Activated CD4-positive, alpha-beta memory T cell treated with anti-CD3 and anti-CD28 coated beads for 36 hours (primary cell): ENCODE measurements at regions of chr18 and their contacts with region 1.

Region 1: GRCh38 chr18:77108001-77108692 is 24.4 kb downstream of the MBP start:
- DNase-seq: peak; percentile 79
- H3K4me3 Mint-ChIP-seq: peak overlapping the region; percentile 31
- H3K27ac Mint-ChIP-seq: peak overlapping the region; percentile 71
- H3K4me1 Mint-ChIP-seq: peaks cover 92% of the 10 kb centered on the region
- H3K27me3 Mint-ChIP-seq: no peaks in the 10 kb centered on the region

Region 2: GRCh38 chr18:77054606-77055428 is 53.3 kb before region 1 on chr18:
- CTCF ChIA-PET with region 1: interaction called, 11 read pairs
- POLR2A ChIA-PET with region 1: interaction called, 4 read pairs
- intact Hi-C with region 1: no loop called
- DNase-seq: peak; percentile 90
- H3K4me3 Mint-ChIP-seq: peak overlapping the region; percentile 81
- H3K27ac Mint-ChIP-seq: peak overlapping the region; percentile 96
- H3K4me1 Mint-ChIP-seq: peaks cover 72% of the 10 kb centered on the region
- H3K27me3 Mint-ChIP-seq: no peaks in the 10 kb centered on the region

Region 3: DNA sequence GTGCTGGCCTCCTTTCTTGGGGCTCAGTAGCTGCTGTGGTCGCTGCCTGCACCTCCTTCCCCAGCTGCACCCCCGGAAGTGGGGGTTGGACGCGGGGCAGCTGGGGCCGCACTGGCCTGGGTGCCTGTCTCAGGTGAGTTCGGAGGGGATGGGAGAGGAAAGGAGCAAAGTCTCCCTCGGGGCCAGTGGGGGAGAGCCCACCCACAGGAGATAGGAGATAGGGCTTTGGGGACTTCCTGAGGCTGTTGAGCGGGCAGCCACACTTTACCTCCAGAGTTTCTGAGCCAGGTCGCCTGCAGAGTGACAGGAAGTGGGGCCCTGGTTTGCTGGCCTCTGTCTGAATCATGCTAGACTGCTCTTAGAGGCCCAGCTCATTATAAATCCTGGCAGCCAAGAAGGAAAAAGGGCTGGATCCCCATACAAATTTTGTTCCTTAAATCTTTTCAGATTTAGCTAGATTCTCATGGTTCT is 16.3 kb after region 1 on chr18:
- CTCF ChIA-PET with region 1: interaction called, 36 read pairs
- POLR2A ChIA-PET with region 1: interaction called, 12 read pairs
- intact Hi-C with region 1: loop called (anchors 1 kb)
- DNase-seq: peak; percentile 80
- H3K4me3 Mint-ChIP-seq: peak overlapping the region; percentile 75
- H3K27ac Mint-ChIP-seq: peak overlapping the region; percentile 93
- H3K4me1 Mint-ChIP-seq: peaks cover 93% of the 10 kb centered on the region
- H3K27me3 Mint-ChIP-seq: no peaks in the 10 kb centered on the region

Region 4: DNA sequence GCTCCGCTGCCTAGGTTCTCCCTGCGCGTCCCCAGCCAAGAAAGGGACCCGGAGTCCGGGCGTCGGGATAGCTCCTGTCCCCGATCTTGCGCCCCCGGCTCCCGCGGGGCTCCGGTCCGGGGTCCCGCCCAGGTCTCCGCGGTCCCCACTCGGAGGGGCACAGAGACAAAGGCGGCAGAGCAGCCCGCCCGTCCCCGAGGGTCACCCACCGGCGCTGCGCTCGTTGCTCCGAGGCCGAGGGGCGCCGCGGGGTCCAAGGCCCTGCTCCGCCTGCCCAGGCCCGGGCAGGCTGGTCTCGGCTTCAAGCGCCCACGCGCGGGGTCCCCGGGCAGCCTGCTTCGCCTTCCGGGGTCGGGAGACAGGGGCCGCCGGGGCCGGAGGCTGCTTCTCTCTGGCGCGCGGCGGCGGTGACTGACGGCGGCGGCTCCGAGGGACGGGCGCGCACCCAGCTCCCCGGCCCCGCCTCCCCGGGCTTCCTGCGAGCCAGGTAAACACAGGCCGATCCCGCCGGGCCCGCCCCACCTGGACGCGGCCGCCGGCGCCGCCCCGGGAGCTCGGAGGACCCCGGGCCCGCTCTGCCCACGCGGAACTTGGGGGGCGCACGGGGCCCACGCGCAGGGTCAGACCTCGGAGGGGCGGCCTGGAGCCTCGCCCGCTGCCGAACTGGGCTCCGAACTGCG is 24.4 kb after region 1 on chr18 and contains the start of gene MBP:
- CTCF ChIA-PET with region 1: interaction called, 10 read pairs
- POLR2A ChIA-PET with region 1: interaction called, 25 read pairs
- intact Hi-C with region 1: no loop called
- DNase-seq: peak; percentile 79
- H3K4me3 Mint-ChIP-seq: peak within 1 kb of the TSS; percentile 96
- H3K27ac Mint-ChIP-seq: peak within 1 kb of the TSS; percentile 93
- H3K4me1 Mint-ChIP-seq: peaks cover 44% of the 10 kb centered on the region
- H3K27me3 Mint-ChIP-seq: no peaks in the 10 kb centered on the region
- total RNA-seq, gene MBP: 38.9 to 40.4 TPM